Activated naive CD4-positive, alpha-beta T cell treated with anti-CD3 and anti-CD28 coated beads for 36 hours (primary cell): ENCODE measurements at regions of chr17 and their contacts with region 1.

Region 1: GRCh38 chr17:48610282-48611211 is at the start of gene HOXB7:
- DNase-seq: peak; percentile 77
- H3K4me3 Mint-ChIP-seq: peak within 1 kb of the TSS; percentile 89
- H3K27ac Mint-ChIP-seq: no peak within 1 kb of the TSS
- H3K4me1 Mint-ChIP-seq: peaks cover 33% of the 10 kb centered on the region
- H3K27me3 Mint-ChIP-seq: peaks cover 71% of the 10 kb centered on the region
- total RNA-seq, gene HOXB7: 0.29 TPM in 1 of 2 experiments, not detected in the other

Region 2: DNA sequence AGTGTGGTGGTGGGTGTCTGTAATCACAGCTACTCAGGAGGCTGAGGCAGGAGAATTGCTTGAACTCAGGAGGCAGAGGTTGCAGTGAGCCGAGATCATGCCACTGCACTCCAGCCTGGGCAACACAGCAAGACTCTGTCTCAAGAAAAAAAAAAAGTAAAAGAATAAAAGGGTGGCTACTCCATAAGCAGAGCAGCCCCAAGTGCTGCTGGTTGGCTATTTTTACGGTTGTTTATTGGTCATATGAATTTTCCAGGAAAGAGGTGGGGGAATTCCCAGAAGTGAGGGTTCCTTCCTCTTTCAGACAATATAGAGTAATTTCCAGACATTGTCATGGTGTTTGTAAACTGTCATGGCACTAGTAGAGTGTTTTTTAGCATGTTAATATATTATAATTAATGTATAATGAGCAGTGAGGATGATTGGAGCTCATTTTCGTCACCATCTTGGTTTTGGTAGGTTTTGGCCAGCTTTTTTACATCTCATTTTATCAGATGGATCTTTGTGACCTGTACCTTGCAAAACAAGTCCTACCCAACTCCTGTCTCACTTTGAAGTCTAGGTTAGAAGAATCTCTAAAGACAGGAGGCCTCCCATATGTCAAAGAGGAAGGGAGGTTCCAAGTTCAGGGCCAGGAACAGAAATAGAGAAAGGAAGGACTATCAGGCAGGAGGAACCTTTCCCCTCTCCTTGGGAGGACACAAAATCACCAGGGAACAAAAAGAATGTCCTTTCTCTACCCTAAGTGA is 118.8 kb before region 1 on chr17:
- CTCF ChIA-PET with region 1: no interaction called
- intact Hi-C with region 1: no loop called
- DNase-seq: no peak
- H3K4me3 Mint-ChIP-seq: no peak overlapping the region
- H3K27ac Mint-ChIP-seq: no peak overlapping the region
- H3K4me1 Mint-ChIP-seq: peaks cover 19% of the 10 kb centered on the region
- H3K27me3 Mint-ChIP-seq: peaks cover 17% of the 10 kb centered on the region

Region 3: DNA sequence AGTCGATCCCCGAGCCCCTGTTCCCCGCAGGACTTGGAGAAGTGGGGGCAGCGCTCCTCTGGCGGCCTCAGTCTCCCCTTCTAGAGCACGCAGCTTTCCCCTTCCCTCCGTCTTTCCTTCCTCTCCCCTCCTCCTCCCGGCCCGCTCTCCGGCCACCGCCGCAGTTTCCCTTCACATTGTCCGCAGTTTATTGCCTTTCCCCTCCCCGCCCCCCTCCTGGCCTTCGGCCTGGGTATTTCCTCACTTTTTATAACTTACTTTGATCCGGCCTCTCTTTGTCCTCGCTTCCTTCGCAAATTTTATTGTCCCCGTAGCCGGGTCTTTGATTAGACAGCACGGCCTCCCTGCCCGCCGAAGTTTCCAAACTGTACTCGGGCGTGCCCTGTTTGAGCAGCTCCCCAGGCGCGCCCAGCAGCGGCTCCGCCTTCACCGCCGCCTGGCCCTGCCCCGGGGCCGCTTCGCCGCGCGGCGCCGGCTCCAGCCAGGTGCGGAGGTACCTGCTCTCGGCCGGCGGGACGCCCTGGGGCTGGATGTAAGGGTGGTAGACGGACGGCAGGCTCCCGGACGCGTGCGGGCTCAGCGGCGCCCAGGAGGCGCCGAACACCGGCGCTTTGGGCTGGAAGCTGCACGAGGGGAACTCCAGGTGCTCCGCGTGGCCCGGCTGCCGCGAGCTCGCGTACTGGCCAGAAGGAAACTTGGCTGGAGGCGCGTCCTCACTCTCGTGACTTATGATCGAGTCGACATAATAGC is 15.1 kb after region 1 on chr17:
- CTCF ChIA-PET with region 1: interaction called, 12 read pairs
- intact Hi-C with region 1: loop called (anchors 1 kb)
- DNase-seq: peak; percentile 55
- H3K4me3 Mint-ChIP-seq: peak overlapping the region; percentile 86
- H3K27ac Mint-ChIP-seq: no peak overlapping the region
- H3K4me1 Mint-ChIP-seq: peaks cover 7% of the 10 kb centered on the region
- H3K27me3 Mint-ChIP-seq: peaks cover 71% of the 10 kb centered on the region